ENCODE measurements at regions of chr3 and their contacts with region 1.

Region 1: DNA sequence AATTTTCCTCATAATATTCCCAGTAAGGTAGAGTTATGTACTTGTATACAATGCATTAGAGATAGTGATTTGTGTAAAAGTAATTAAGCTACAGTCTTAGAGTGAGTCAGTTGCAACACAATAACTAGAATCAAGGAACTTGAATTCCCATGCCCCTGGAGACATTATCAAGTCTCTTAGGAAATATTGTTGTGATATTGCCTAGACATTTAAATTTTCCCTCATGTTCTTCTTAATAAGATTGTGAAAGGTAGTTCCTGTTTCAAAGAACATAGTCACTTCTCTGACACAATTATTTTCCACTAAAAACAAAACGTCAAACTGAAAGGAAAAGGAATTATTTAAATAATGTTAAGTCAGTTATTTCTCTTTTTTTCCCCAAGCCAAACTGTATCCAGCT is 13.0 kb upstream of the ATP1B3 start:
- H3K4me3 Mint-ChIP-seq: peak overlapping the region; percentile 46
- H3K27ac Mint-ChIP-seq: peak overlapping the region; percentile 92
- H3K4me1 Mint-ChIP-seq: peaks cover 38% of the 10 kb centered on the region
- H3K27me3 Mint-ChIP-seq: no peaks in the 10 kb centered on the region

Region 2: GRCh38 chr3:141796081-141796888 is 67.2 kb before region 1 on chr3:
- intact Hi-C with region 1: loop called (anchors 5 kb)
- H3K4me3 Mint-ChIP-seq: no peak overlapping the region
- H3K27ac Mint-ChIP-seq: peak overlapping the region; percentile 95
- H3K4me1 Mint-ChIP-seq: peaks cover 35% of the 10 kb centered on the region
- H3K27me3 Mint-ChIP-seq: peaks cover 2% of the 10 kb centered on the region

Region 3: DNA sequence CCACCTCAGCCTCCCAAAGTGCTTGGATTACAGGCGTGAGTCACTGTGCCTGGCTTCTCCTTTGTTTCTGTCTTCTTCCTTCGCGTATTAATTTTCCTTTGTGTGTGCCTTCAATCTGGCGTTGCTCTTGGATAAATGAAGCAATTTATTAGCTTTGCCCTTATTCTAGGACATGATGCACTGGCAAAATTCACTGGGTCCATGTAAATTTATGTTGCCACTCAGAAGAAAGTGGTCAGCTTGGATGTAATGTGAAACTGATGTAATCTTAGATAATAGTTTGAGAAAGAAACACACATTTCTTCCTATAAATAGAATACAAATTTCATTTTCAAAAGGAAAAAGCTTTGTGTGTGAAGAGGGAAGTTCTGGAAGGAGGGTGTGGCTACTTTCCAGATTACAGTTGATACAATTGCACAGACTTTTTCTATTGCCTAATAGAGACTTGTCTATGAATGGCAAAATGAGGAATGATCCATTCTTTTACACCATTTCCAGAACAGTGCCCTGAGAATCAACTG is 10.3 kb before region 1 on chr3:
- intact Hi-C with region 1: loop called (anchors 1 kb)
- H3K4me3 Mint-ChIP-seq: no peak overlapping the region
- H3K27ac Mint-ChIP-seq: peak overlapping the region; percentile 85
- H3K4me1 Mint-ChIP-seq: peaks cover 52% of the 10 kb centered on the region
- H3K27me3 Mint-ChIP-seq: no peaks in the 10 kb centered on the region

Measured in dendritic cell treated with granulocyte-macrophage colony-stimulating factor and Interleukin-4, amounts not matched to agents 40 ng/mL and 50 ng/mL, for 4 days (primary cell).